ENCODE measurements at regions of chr15 and their contacts with region 1.

Region 1: DNA sequence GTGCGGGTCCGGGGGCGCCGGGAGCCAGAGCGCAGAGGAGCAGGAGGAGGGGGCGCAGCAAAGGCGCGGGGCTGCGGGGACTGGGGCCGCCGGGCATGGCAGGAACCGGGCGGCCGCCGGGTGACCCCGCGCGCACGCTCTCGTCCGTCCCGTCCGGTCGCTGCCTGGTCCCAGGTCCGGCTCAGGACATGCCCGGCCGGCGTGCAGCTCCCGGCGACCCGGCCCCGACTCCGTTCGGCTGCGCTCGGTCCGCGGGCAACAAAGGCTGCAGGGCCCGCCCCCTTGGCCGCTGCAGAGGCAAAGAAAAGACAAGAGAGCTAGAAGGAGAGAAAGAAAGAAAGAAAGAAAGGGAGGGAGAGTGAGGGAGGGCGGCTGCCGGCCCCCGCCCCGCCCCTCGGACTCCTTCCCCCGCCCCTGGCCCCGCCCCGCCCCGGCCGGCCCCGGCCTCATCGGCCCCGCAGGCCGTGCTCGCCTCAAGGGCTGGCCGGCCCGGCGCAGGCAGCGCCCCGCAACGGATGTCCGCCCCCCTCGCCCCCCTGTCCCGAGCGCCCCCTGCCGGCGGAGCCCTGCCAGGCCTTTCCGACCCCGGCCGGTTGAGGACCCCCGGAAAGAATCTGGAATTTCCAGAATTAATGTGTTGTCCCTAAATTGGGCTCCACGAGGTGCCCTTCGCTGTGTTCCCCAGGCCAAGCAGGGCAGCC is at the start of gene ADAMTS7:
- DNase-seq: peak; percentile 65
- ATAC-seq: peak; percentile 92
- H3K4me3 Mint-ChIP-seq: peak within 1 kb of the TSS; percentile 85
- H3K27ac Mint-ChIP-seq: no peak within 1 kb of the TSS
- H3K4me1 Mint-ChIP-seq: peaks cover 15% of the 10 kb centered on the region
- H3K27me3 Mint-ChIP-seq: peaks cover 25% of the 10 kb centered on the region
- CTCF ChIP-seq: no peak
- total RNA-seq, gene ADAMTS7: 12.0 and 14.1 TPM in 2 replicates

Region 2: DNA sequence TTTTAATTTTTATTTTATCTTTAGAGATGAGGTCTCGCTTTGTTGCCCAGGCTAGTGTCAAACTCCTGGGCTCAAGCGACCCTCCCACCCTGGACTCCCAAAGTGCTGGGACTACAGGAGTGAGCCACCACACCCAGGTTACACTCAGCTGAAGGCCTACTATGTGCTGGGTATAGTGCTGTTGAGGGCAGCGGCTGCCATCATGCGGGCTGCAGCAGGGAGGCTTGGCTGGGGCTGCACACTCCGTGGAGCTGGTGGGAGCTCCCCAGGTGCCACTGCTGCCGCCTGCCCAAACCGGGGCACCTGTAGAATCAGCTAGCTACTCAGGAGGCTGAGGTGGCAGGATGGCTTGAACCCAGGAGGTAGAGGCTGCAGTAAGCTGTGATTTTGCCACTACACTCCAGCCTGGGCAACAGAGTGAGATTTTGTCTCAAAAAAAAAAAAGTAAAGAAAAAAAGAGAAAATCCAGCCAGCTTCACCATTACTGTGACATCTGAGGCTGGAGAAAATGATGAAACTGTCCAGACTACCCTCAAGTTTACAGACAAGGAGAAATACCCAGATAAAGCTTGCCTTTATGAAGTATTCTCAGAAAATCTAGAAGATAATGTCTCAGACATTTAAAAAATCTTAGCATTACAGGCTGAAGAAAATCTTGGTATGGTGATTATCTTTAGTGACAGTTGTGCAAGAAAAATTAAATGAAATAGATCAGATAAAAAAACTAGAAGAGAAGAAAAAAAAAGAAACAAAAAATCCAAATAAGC is 429.0 kb before region 1 on chr15:
- CTCF ChIA-PET with region 1: no interaction called
- POLR2A ChIA-PET with region 1: no interaction called
- intact Hi-C with region 1: no loop called
- DNase-seq: no peak
- ATAC-seq: no peak
- H3K4me3 Mint-ChIP-seq: no peak overlapping the region
- H3K27ac Mint-ChIP-seq: no peak overlapping the region
- H3K4me1 Mint-ChIP-seq: no peaks in the 10 kb centered on the region
- H3K27me3 Mint-ChIP-seq: peaks cover 44% of the 10 kb centered on the region
- CTCF ChIP-seq: no peak

Region 3: GRCh38 chr15:78618490-78618934 is 192.8 kb before region 1 on chr15:
- CTCF ChIA-PET with region 1: no interaction called
- POLR2A ChIA-PET with region 1: no interaction called
- intact Hi-C with region 1: loop called (anchors 10 kb)
- DNase-seq: peak; percentile 59
- ATAC-seq: peak; percentile 67
- H3K4me3 Mint-ChIP-seq: no peak overlapping the region
- H3K27ac Mint-ChIP-seq: no peak overlapping the region
- H3K4me1 Mint-ChIP-seq: peaks cover 5% of the 10 kb centered on the region
- H3K27me3 Mint-ChIP-seq: peaks cover 34% of the 10 kb centered on the region
- CTCF ChIP-seq: peak; percentile 45

Region 4: DNA sequence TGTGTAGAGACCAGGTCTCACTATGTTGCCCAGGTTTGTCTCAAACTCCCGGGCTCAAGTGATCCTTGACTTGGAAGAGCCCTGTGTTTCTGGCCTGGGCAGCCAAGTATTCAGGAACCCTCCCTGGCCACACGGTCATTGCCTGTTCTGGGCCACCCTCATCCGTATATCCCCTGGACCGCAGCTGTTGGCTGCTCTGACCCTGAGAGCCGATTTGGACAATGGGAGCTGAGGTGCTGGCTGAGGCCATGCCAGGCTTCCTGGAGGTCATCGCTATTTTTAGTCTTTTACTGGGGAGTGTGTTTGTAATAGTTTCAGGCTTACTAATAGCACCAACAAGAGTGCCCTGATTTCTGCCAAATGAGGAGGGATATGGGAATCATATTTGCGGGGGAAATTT is 60.7 kb before region 1 on chr15:
- CTCF ChIA-PET with region 1: interaction called, 10 read pairs
- POLR2A ChIA-PET with region 1: interaction called, 3 read pairs
- intact Hi-C with region 1: no loop called
- DNase-seq: no peak
- ATAC-seq: no peak
- H3K4me3 Mint-ChIP-seq: peak overlapping the region; percentile 44
- H3K27ac Mint-ChIP-seq: peak overlapping the region; percentile 18
- H3K4me1 Mint-ChIP-seq: peaks cover 8% of the 10 kb centered on the region
- H3K27me3 Mint-ChIP-seq: no peaks in the 10 kb centered on the region
- CTCF ChIP-seq: no peak

Region 5: DNA sequence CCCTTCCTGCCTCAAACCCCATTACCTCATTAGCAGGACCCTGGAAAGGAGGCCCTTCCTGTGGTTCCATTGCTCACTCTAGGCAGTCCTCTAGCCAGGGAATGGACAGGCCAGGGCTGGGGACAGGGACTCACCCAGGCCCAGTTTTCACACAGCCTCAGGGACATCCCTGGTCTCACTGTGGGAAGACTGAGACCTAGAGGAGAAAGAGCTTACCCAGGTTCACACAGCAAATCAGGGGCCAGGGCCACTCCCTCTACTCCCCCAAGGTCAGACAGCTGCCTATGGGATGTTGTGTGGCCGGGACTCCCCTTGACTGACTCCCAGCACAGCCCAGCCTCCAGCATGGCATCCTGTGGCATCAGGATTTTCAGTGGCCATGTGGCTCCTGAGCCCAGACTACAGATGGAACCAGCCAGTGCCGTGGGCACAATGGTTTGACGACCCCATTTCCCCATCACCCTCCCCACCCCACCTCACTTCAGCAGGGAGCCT is 49.3 kb before region 1 on chr15:
- CTCF ChIA-PET with region 1: interaction called, 10 read pairs
- POLR2A ChIA-PET with region 1: interaction called, 20 read pairs
- intact Hi-C with region 1: loop called (anchors 1 kb)
- DNase-seq: no peak
- ATAC-seq: no peak
- H3K4me3 Mint-ChIP-seq: peak overlapping the region; percentile 46
- H3K27ac Mint-ChIP-seq: peak overlapping the region; percentile 77
- H3K4me1 Mint-ChIP-seq: peaks cover 62% of the 10 kb centered on the region
- H3K27me3 Mint-ChIP-seq: no peaks in the 10 kb centered on the region
- CTCF ChIP-seq: no peak

Region 6: GRCh38 chr15:78859971-78860732 is 48.9 kb after region 1 on chr15:
- CTCF ChIA-PET with region 1: interaction called, 3 read pairs
- POLR2A ChIA-PET with region 1: no interaction called
- intact Hi-C with region 1: loop called (anchors 2 kb)
- DNase-seq: peak; percentile 53
- ATAC-seq: peak; percentile 91
- H3K4me3 Mint-ChIP-seq: peak overlapping the region; percentile 85
- H3K27ac Mint-ChIP-seq: peak overlapping the region; percentile 84
- H3K4me1 Mint-ChIP-seq: peaks cover 9% of the 10 kb centered on the region
- H3K27me3 Mint-ChIP-seq: no peaks in the 10 kb centered on the region
- CTCF ChIP-seq: no peak